H1 (cell line): ENCODE measurements at regions of chr7 and their contacts with region 1.

Region 1: GRCh38 chr7:100803398-100804233 is 23.7 kb downstream of the EPHB4 start:
- DNase-seq: peak in 1 of 2 experiments; percentile 63
- H3K4me3 ChIP-seq: no peak overlapping the region
- H3K27ac ChIP-seq: no peak overlapping the region
- H3K4me1 ChIP-seq: peaks cover 0 to 8% (median 3%) of the 10 kb centered on the region in 4 experiments; a peak in 5 of 7 replicates
- H3K27me3 ChIP-seq: no peaks in the 10 kb centered on the region
- CTCF ChIP-seq: no peak
- EP300 ChIP-seq: no peak
- POLR2A ChIP-seq: no peak
- RAD21 ChIP-seq: no peak

Region 2: GRCh38 chr7:100705753-100706671 is 97.6 kb before region 1 on chr7 and contains the start of gene POP7:
- CTCF ChIA-PET with region 1: interaction called, 30 read pairs
- POLR2A ChIA-PET with region 1: interaction called, 11 read pairs
- DNase-seq: peak; percentile 94 to 99
- H3K4me3 ChIP-seq: peak within 1 kb of the TSS; percentile 83 to 94 (median 90)
- H3K27ac ChIP-seq: peak within 1 kb of the TSS; percentile 86
- H3K4me1 ChIP-seq: peaks cover 0 to 11% (median 2%) of the 10 kb centered on the region in 4 experiments; a peak in 3 of 7 replicates
- H3K27me3 ChIP-seq: no peaks in the 10 kb centered on the region
- CTCF ChIP-seq: no peak
- EP300 ChIP-seq: peak in 1 of 2 experiments; percentile 54; a peak in 1 of 3 replicates
- POLR2A ChIP-seq: peak; percentile 79 to 81
- RAD21 ChIP-seq: no peak
- total RNA-seq, gene POP7: 92.5 and 96.7 TPM in 2 replicates

Region 3: GRCh38 chr7:100763556-100764140 is 40.0 kb before region 1 on chr7:
- CTCF ChIA-PET with region 1: interaction called, 12 read pairs
- POLR2A ChIA-PET with region 1: interaction called, 12 read pairs
- DNase-seq: no peak
- H3K4me3 ChIP-seq: no peak overlapping the region
- H3K27ac ChIP-seq: no peak overlapping the region
- H3K4me1 ChIP-seq: peaks cover 0 to 2% (median 0%) of the 10 kb centered on the region in 4 experiments; a peak in 3 of 7 replicates
- H3K27me3 ChIP-seq: no peaks in the 10 kb centered on the region; a peak in 1 of 7 replicates
- CTCF ChIP-seq: no peak
- EP300 ChIP-seq: no peak
- POLR2A ChIP-seq: no peak
- RAD21 ChIP-seq: no peak

Region 4: DNA sequence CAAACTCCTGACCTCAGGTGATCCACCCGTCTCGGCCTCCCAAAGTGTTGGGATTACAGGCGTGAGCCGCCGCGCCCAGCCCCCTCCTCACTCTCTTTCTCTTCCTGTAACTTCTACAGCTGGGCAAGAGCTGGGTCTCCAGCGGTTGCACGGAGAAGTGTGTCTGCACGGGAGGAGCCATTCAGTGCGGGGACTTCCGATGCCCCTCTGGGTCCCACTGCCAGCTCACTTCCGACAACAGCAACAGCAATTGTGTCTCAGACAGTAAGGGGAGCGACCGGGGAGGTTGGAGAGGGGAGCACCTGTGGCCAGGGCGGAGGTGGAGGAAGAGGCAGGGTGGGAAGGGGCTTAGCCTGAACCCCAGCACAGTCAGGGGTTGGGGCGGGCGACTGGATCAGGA is 17.7 kb before region 1 on chr7:
- CTCF ChIA-PET with region 1: interaction called, 90 read pairs
- POLR2A ChIA-PET with region 1: interaction called, 42 read pairs
- DNase-seq: peak in 1 of 2 experiments; percentile 50
- H3K4me3 ChIP-seq: no peak overlapping the region
- H3K27ac ChIP-seq: no peak overlapping the region
- H3K4me1 ChIP-seq: peaks cover 0 to 3% (median 0%) of the 10 kb centered on the region in 4 experiments; a peak in 2 of 7 replicates
- H3K27me3 ChIP-seq: no peaks in the 10 kb centered on the region
- CTCF ChIP-seq: no peak
- EP300 ChIP-seq: no peak
- POLR2A ChIP-seq: no peak
- RAD21 ChIP-seq: peak in 1 of 2 experiments; percentile 6; a peak in 1 of 4 replicates

Region 5: DNA sequence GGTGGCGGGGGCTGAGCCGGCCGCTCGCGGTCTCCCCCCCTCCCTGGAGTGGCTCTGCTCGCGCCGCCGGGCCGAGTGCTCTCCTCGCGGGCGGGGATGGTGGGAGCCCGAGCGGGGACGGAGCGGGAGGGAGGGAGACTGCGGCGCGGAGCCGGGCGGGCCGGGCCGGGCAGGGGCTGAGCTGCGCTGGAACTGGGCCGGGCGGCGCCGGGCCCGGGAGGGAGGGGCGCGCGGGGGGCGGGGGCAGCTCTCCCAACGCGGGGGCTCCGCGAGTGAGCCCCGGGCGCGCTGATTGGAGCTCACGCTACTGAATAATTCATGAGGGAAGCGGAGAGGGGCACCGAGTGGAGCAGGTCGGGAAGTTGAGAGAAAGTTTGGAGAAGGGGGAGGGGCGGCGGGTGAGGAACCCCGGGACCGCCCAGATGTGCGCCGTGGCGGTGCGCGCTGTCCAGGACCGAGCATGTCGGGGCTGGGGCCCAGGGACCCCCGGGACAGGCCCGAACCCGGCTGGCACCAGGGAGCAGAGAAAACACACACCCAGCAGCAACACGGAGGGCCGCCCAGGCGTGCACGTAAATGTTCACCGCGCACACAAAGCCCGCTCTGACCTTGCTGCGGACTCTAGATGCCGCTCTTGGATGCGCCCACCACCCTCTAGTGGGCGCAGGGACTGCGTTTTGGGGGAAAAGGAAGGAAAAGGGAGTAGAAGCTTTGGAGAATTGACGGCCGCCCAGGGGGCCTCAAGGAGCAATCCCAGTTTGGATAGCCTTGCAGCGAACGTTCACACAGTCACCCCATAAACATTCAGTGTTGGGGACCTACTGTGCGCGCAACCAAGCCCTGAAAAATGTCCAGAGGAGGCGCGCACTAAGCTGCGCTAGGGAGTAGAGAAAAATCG is 24.0 kb after region 1 on chr7 and contains the start of gene EPHB4:
- CTCF ChIA-PET with region 1: interaction called, 42 read pairs
- POLR2A ChIA-PET with region 1: interaction called, 76 read pairs
- DNase-seq: peak in 1 of 2 experiments; percentile 93
- H3K4me3 ChIP-seq: peak within 1 kb of the TSS; percentile 88 to 100 (median 92)
- H3K27ac ChIP-seq: peak within 1 kb of the TSS; percentile 81
- H3K4me1 ChIP-seq: peaks cover 0 to 13% (median 10%) of the 10 kb centered on the region in 4 experiments; a peak in 6 of 7 replicates
- H3K27me3 ChIP-seq: no peaks in the 10 kb centered on the region
- CTCF ChIP-seq: peak; percentile 55 to 63 (median 61)
- EP300 ChIP-seq: no peak
- POLR2A ChIP-seq: peak in 1 of 2 experiments; percentile 30; a peak in 1 of 3 replicates
- RAD21 ChIP-seq: peak; percentile 30 to 60; a peak in 3 of 4 replicates
- total RNA-seq, gene EPHB4: 113 and 122 TPM in 2 replicates

Region 6: GRCh38 chr7:100852048-100852872 is 48.6 kb after region 1 on chr7 and contains the start of gene SLC12A9:
- CTCF ChIA-PET with region 1: interaction called, 215 read pairs
- POLR2A ChIA-PET with region 1: interaction called, 21 read pairs
- DNase-seq: peak in 1 of 2 experiments; percentile 99
- H3K4me3 ChIP-seq: peak within 1 kb of the TSS; percentile 50 to 95 (median 75)
- H3K27ac ChIP-seq: peak within 1 kb of the TSS; percentile 17; the same call in 1 of the 2 replicates
- H3K4me1 ChIP-seq: peaks cover 0 to 6% (median 0%) of the 10 kb centered on the region in 4 experiments; a peak in 1 of 7 replicates
- H3K27me3 ChIP-seq: no peaks in the 10 kb centered on the region
- CTCF ChIP-seq: peak in 2 of 3 experiments; percentile 91 to 92; a peak in 3 of 4 replicates
- EP300 ChIP-seq: no peak
- POLR2A ChIP-seq: peak in 1 of 2 experiments; percentile 15; a peak in 1 of 3 replicates
- RAD21 ChIP-seq: peak; percentile 98
- total RNA-seq, gene SLC12A9: 40.1 and 40.7 TPM in 2 replicates

Region 7: DNA sequence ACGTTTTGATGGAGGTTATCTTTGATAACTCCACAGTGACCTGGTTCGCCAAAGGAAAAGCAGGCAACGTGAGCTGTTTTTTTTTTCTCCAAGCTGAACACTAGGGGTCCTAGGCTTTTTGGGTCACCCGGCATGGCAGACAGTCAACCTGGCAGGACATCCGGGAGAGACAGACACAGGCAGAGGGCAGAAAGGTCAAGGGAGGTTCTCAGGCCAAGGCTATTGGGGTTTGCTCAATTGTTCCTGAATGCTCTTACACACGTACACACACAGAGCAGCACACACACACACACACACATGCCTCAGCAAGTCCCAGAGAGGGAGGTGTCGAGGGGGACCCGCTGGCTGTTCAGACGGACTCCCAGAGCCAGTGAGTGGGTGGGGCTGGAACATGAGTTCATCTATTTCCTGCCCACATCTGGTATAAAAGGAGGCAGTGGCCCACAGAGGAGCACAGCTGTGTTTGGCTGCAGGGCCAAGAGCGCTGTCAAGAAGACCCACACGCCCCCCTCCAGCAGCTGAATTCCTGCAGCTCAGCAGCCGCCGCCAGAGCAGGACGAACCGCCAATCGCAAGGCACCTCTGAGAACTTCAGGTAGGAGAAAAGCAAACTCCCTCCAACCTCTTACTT is 323.1 kb after region 1 on chr7 and contains the start of gene SERPINE1:
- CTCF ChIA-PET with region 1: no interaction called
- POLR2A ChIA-PET with region 1: no interaction called
- DNase-seq: peak in 1 of 2 experiments; percentile 73
- H3K4me3 ChIP-seq: peak within 1 kb of the TSS in 3 of 4 experiments; percentile 9 to 34 (median 29); a peak in 3 of 8 replicates
- H3K27ac ChIP-seq: no peak within 1 kb of the TSS
- H3K4me1 ChIP-seq: peaks cover 11 to 19% (median 12%) of the 10 kb centered on the region in 4 experiments
- H3K27me3 ChIP-seq: no peaks in the 10 kb centered on the region; a peak in 1 of 7 replicates
- CTCF ChIP-seq: peak; percentile 6 to 39 (median 16); a peak in 3 of 4 replicates
- EP300 ChIP-seq: no peak
- POLR2A ChIP-seq: no peak
- RAD21 ChIP-seq: no peak
- total RNA-seq, gene SERPINE1: 5.6 and 6.8 TPM in 2 replicates